Activated B cell treated with CpG ODN at 0.5 μM for 24 hours (primary cell): ENCODE measurements at regions of chr12 and their contacts with region 1.

Region 1: DNA sequence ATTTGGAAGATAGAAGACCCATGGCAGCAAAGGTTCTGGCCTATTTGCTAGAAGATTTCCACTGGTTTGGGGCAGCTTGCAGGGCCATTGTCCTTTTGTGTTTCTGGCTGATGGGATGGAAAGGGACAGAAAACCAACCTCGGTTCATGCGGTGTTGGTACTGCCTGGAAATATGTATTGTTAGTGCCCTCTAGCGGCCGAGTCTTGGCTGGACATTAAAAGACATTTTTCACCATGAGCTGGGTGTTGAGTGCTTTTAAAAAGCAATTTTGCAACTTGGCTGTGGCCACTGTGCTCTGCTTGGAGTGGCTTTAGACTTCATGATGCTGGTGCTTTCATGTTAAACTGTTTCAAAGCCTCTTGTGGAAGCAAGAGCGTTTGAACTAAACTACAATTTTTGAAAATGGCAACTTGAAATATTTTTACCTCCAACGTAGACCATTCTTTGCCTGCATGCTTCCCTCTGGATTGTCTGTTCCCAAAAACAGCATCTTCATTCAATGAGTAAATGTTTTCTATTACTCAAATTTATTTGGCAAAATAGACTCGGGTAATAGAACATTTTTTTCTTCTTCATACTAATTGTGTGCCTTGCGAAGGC is 102.7 kb upstream of the TBX5 start:
- DNase-seq: peak; percentile 21
- ATAC-seq: peak; percentile 34
- H3K4me3 Mint-ChIP-seq: no peak overlapping the region
- H3K27ac Mint-ChIP-seq: no peak overlapping the region
- H3K4me1 Mint-ChIP-seq: no peaks in the 10 kb centered on the region
- H3K27me3 Mint-ChIP-seq: peaks cover 4% of the 10 kb centered on the region
- CTCF ChIP-seq: no peak

Region 2: DNA sequence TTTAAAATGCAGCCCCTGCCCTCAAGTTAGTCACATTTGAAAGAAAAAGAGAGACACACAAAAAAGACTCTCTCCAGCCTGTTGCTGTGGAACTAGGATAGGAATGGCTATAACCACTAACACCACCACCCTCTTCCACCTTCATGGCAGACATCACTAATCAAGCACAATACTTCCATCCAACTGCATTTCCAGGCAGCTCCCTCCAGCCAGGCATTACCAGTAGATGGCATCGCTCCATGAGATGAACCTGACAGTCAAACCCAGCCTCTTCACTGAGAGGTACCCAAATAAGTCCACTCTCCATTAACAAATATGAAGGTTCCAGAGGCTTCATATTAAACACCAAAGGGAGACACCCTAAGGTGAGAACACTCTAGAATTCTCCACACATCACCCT is 1198.1 kb before region 1 on chr12:
- CTCF ChIA-PET with region 1: no interaction called
- POLR2A ChIA-PET with region 1: no interaction called
- intact Hi-C with region 1: loop called (anchors 5 kb)
- DNase-seq: no peak
- ATAC-seq: no peak
- H3K4me3 Mint-ChIP-seq: no peak overlapping the region
- H3K27ac Mint-ChIP-seq: no peak overlapping the region
- H3K4me1 Mint-ChIP-seq: no peaks in the 10 kb centered on the region
- H3K27me3 Mint-ChIP-seq: no peaks in the 10 kb centered on the region
- CTCF ChIP-seq: no peak

Region 3: GRCh38 chr12:113965951-113966797 is 542.5 kb before region 1 on chr12 and contains the start of gene RBM19:
- CTCF ChIA-PET with region 1: interaction called, 20 read pairs
- POLR2A ChIA-PET with region 1: no interaction called
- intact Hi-C with region 1: loop called (anchors 1 kb)
- DNase-seq: peak; percentile 90
- ATAC-seq: peak; percentile 98
- H3K4me3 Mint-ChIP-seq: peak within 1 kb of the TSS; percentile 100
- H3K27ac Mint-ChIP-seq: peak within 1 kb of the TSS; percentile 95
- H3K4me1 Mint-ChIP-seq: peaks cover 44% of the 10 kb centered on the region
- H3K27me3 Mint-ChIP-seq: peaks cover 6% of the 10 kb centered on the region
- CTCF ChIP-seq: peak; percentile 54
- total RNA-seq, gene RBM19: 77.0 and 79.9 TPM in 2 replicates

Region 4: DNA sequence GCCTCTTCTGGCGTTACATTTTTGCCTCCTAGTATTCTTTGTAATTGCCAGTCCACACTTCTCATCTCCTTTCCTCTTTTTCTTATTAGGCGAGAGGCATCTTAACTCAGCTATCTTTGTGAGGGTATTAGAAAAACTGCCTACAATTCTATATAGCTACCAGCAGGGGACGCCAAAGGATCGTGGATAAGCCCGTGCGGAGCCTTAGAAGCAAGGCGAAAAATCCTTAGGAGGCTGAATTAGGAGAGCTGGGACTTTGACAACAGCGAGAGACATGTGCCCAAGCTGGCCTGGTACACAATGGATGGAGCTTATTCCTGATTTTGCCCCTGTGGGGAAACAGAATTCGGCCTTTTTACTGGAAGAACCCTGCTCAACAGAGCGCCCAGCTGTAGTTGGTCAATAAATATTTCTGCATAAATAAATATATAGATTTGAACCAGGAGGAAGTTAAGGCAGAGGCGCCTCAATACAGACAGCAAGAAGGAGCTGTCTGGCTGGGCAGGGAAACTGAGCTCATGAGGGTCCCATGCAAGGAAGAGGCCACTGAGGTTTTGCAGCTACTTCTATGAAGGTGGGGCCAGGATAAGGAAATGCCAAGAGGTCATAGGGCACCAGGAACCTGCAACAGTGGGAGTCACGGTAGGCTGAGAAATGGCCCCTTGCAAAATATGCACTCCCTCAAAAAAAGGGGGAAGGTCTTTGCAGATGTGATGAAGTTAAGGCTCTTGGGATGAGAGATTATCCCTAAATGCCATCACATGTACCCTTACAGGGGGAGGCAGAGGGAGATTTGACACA is 527.9 kb before region 1 on chr12:
- CTCF ChIA-PET with region 1: interaction called, 14 read pairs
- POLR2A ChIA-PET with region 1: no interaction called
- intact Hi-C with region 1: loop called (anchors 1 kb)
- DNase-seq: no peak
- ATAC-seq: no peak
- H3K4me3 Mint-ChIP-seq: no peak overlapping the region
- H3K27ac Mint-ChIP-seq: no peak overlapping the region
- H3K4me1 Mint-ChIP-seq: no peaks in the 10 kb centered on the region
- H3K27me3 Mint-ChIP-seq: peaks cover 21% of the 10 kb centered on the region
- CTCF ChIP-seq: no peak